ENCODE measurements at regions of chr17 and their contacts with region 1.

Region 1: DNA sequence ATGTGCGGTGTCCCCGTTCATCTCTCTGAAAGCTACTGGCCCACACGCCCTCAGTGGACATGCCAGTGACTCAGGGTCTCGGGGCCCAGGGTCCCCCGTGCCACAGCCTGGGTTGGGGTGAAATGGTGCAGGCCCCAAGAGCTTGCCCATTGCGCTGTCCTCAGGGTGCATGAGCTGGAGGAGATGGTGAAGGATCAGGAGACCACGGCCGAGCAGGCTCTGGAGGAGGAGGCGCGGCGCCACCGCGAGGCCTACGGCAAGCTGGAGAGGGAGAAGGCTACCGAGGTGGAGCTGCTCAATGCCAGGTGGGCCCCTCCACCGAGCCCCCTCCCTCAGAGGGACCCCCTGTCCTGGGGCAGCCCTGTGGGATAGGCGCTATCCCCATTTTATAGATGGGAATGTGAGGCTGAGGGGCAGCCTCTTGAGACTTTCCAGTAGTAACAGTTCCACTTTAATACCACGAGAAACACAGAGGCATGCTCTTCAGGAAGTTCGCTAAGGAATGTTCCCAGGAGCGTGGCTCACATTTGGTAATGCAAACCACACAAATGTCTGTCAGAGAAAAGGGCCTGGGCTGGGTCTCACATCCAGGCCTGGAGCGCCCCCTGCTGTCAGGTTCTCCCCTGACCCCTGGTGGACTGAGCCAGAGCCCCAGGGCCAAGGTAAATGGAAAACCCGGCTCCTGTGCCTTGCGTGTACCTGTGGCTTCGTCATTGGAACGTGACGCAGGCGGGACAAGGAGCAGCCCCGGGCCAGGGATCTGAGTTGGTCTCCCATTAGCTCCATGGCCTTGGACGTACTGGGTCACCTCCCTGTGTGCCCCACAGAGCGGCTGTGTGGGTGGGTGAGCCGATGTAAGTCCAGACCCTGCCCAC is 133.7 kb downstream of the RAB11FIP4 start:
- DNase-seq: peak; percentile 86
- ATAC-seq: peak; percentile 79
- H3K4me3 ChIP-seq: no peak overlapping the region
- H3K4me3 Mint-ChIP-seq: no peak overlapping the region
- H3K27ac ChIP-seq: no peak overlapping the region
- H3K27ac Mint-ChIP-seq: peak overlapping the region; percentile 65
- H3K4me1 ChIP-seq: peaks cover 0 to 13% of the 10 kb centered on the region in 2 donors
- H3K4me1 Mint-ChIP-seq: peaks cover 9% of the 10 kb centered on the region
- H3K27me3 ChIP-seq: no peaks in the 10 kb centered on the region
- H3K27me3 Mint-ChIP-seq: no peaks in the 10 kb centered on the region
- CTCF ChIP-seq: peak; percentile 89

Region 2: GRCh38 chr17:31388770-31389661 is 136.1 kb before region 1 on chr17:
- CTCF ChIA-PET with region 1: interaction called, 54 read pairs
- POLR2A ChIA-PET with region 1: no interaction called
- intact Hi-C with region 1: loop called (anchors 1 kb)
- DNase-seq: peak; percentile 70
- ATAC-seq: peak; percentile 62
- H3K4me3 ChIP-seq: no peak overlapping the region
- H3K4me3 Mint-ChIP-seq: peak overlapping the region; percentile 77
- H3K27ac ChIP-seq: no peak overlapping the region
- H3K27ac Mint-ChIP-seq: no peak overlapping the region
- H3K4me1 ChIP-seq: peaks cover 16 to 17% of the 10 kb centered on the region in 2 donors
- H3K4me1 Mint-ChIP-seq: peaks cover 15% of the 10 kb centered on the region
- H3K27me3 ChIP-seq: peaks cover 0 to 45% (median 20%) of the 10 kb centered on the region in 4 experiments
- H3K27me3 Mint-ChIP-seq: peaks cover 40% of the 10 kb centered on the region
- CTCF ChIP-seq: peak; percentile 77

Region 3: DNA sequence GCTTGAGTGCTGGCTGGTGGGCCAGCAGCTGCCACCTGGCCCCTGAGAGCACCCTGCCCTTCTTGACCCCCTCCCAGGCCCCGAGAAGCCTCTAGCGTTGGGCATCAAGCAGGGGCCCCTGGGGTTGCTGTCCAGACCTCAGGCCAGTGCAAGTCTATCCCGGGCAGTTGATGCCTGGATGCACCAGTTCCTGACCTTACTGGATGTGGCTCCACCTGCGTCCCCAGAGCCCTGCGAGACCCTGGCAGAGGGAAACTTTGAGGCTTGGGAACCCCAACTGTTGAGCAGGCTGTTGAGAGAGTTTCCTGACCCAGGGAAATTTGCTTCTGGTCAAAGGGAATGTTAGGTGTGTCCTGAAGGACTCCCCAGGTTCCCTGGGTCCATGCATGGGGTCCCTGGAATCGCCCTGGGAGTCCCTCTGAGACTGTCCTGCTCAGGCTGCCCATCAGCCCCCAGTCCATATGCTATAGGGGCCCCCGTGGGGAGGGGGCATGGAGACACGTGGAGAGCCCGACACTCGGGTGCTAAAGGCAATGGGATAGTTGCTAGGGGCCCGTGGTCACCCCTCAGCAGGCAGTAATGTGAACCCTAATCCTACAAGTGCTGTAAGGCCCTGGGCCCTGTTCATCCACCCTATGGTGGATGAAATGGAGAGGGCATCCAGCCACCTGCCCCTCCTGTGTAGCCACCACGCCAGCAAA is 87.3 kb before region 1 on chr17:
- CTCF ChIA-PET with region 1: interaction called, 460 read pairs
- POLR2A ChIA-PET with region 1: interaction called, 3 read pairs
- intact Hi-C with region 1: loop called (anchors 1 kb)
- DNase-seq: no peak
- ATAC-seq: no peak
- H3K4me3 ChIP-seq: no peak overlapping the region
- H3K4me3 Mint-ChIP-seq: no peak overlapping the region
- H3K27ac ChIP-seq: no peak overlapping the region
- H3K27ac Mint-ChIP-seq: no peak overlapping the region
- H3K4me1 ChIP-seq: peaks cover 3 to 11% of the 10 kb centered on the region in 2 donors
- H3K4me1 Mint-ChIP-seq: peaks cover 7% of the 10 kb centered on the region
- H3K27me3 ChIP-seq: peaks cover 0 to 5% (median 0%) of the 10 kb centered on the region in 4 experiments
- H3K27me3 Mint-ChIP-seq: no peaks in the 10 kb centered on the region
- CTCF ChIP-seq: no peak

Region 4: DNA sequence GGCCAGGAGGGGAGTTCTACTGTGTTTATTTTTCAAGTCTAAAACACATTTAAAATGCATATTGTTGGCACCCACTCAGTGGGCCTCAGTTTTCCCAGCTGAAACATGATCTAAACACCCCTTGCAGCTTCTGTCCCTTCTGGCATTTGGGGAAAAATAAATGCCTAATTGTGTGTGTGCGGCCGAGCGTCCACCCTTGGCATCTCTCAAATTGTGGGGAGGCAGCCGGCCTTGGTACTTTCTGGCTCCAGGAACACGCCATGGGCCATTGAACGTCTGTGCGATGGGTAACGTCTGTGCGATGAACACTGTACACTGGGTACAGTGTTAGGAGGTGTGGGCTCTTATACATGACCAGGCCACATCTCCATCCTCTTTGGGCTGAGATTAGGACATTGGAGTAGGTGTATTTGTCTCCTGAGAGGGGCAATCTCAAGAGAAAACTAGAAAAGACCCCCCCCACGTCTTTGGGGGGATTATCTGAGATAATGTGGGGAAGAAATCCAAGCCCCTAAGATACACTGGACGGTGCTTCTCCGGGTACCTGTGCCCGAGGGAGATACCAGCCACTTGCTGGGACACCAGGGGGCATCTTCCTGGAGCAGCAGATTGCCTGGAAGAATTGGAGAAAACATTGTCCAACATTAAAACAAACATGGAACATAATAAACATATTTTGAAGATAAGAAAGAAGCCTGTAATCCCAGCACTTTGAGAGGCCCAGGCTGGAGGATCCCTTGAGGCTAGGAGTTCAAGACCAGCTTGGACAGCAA is 78.8 kb before region 1 on chr17:
- CTCF ChIA-PET with region 1: interaction called, 460 read pairs
- POLR2A ChIA-PET with region 1: no interaction called
- intact Hi-C with region 1: no loop called
- DNase-seq: no peak
- ATAC-seq: no peak
- H3K4me3 ChIP-seq: no peak overlapping the region
- H3K4me3 Mint-ChIP-seq: no peak overlapping the region
- H3K27ac ChIP-seq: no peak overlapping the region
- H3K27ac Mint-ChIP-seq: no peak overlapping the region
- H3K4me1 ChIP-seq: peaks cover 1 to 2% of the 10 kb centered on the region in 2 donors
- H3K4me1 Mint-ChIP-seq: peaks cover 6% of the 10 kb centered on the region
- H3K27me3 ChIP-seq: no peaks in the 10 kb centered on the region
- H3K27me3 Mint-ChIP-seq: peaks cover 3% of the 10 kb centered on the region
- CTCF ChIP-seq: no peak

Region 5: DNA sequence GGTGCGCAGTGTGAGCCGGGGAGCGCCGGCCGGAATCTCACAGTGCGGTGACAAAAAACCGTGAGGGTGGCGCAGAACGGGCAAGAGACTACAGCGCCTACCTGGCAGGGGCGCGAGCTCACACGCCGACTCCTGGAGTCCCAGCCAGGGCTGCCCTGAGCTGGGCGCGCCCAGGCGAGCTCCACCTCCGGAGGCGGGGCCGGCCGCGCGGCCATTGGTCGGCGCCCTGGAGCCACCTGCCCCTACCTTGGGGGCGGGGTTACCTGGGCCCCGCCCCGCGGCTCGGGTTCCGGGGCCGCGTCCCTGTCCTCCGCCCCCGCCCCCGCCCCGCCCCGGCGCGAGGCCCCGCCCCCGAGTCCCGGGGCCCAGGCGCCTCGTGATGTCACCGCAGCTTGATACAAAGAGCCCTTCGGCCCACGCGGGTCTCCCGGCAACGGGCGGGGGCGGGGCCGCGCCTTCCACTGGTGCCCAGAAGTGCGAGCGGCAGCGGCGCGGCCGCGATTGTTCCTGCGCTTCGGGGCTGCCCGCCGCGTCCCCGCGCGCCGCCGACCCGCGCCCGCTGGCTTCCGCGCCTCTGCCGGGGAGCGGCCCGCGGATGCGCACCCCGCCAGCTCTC is 37.4 kb before region 1 on chr17:
- CTCF ChIA-PET with region 1: interaction called, 44 read pairs
- POLR2A ChIA-PET with region 1: interaction called, 3 read pairs
- intact Hi-C with region 1: loop called (anchors 1 kb)
- DNase-seq: peak; percentile 96
- ATAC-seq: peak; percentile 85
- H3K4me3 ChIP-seq: peak overlapping the region in 4 of 5 experiments; percentile 74 to 84 (median 82)
- H3K4me3 Mint-ChIP-seq: peak overlapping the region; percentile 94
- H3K27ac ChIP-seq: peak overlapping the region; percentile 65 to 90
- H3K27ac Mint-ChIP-seq: peak overlapping the region; percentile 95
- H3K4me1 ChIP-seq: peaks cover 49 to 54% of the 10 kb centered on the region in 2 donors
- H3K4me1 Mint-ChIP-seq: peaks cover 52% of the 10 kb centered on the region
- H3K27me3 ChIP-seq: no peaks in the 10 kb centered on the region
- H3K27me3 Mint-ChIP-seq: no peaks in the 10 kb centered on the region
- CTCF ChIP-seq: peak; percentile 11

Region 6: DNA sequence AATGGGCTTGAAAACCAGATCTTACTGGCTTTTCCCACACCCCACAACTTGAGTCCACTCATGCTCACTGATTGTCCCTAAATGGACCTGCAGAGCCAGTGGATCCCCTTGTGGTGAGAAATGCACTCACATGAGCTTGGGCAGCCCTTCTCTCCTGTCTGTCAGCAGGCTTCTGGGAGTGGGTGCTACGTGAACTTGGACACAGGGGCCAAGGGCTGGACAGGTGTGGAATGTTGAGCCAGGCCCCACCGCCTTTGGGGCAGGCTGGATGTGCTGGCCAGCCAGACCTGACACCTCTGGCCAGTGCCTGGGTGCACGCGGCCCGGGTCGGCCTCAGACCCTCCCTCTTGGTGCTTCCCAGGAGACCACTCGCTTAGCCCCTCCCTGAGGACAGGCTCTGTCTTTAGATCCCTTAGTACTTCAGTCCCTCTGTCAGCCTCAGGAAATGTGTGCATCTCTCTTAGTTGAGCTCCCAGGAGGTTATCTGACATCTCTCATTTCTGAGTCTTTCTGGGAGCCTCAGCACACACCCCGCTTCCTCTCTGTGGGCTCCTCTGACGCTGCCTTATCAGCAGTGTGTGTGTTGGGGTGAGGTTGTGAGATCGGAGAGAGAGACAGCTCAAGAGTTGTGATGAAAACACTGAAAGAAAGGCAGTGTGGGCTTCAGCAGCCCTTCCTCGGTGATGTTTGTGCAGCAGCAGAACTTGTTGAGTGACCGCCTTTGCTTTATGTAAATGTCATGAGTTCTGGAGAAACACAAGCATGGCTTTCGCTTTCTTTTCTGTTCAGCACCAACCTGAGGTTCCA is 16.7 kb before region 1 on chr17:
- CTCF ChIA-PET with region 1: interaction called, 65 read pairs
- POLR2A ChIA-PET with region 1: interaction called, 4 read pairs
- intact Hi-C with region 1: no loop called
- DNase-seq: peak; percentile 79
- ATAC-seq: peak; percentile 81
- H3K4me3 ChIP-seq: peak overlapping the region; percentile 24 to 65 (median 38)
- H3K4me3 Mint-ChIP-seq: peak overlapping the region; percentile 94
- H3K27ac ChIP-seq: peak overlapping the region; percentile 83 to 89
- H3K27ac Mint-ChIP-seq: peak overlapping the region; percentile 96
- H3K4me1 ChIP-seq: peaks cover 49 to 56% of the 10 kb centered on the region in 2 donors
- H3K4me1 Mint-ChIP-seq: peaks cover 61% of the 10 kb centered on the region
- H3K27me3 ChIP-seq: no peaks in the 10 kb centered on the region
- H3K27me3 Mint-ChIP-seq: no peaks in the 10 kb centered on the region
- CTCF ChIP-seq: peak; percentile 67

Region 7: GRCh38 chr17:31541559-31541958 is 16.4 kb after region 1 on chr17:
- CTCF ChIA-PET with region 1: interaction called, 20 read pairs
- POLR2A ChIA-PET with region 1: no interaction called
- intact Hi-C with region 1: no loop called
- DNase-seq: no peak
- ATAC-seq: no peak
- H3K4me3 ChIP-seq: no peak overlapping the region
- H3K4me3 Mint-ChIP-seq: no peak overlapping the region
- H3K27ac ChIP-seq: no peak overlapping the region
- H3K27ac Mint-ChIP-seq: peak overlapping the region; percentile 74
- H3K4me1 ChIP-seq: peaks cover 42 to 48% of the 10 kb centered on the region in 2 donors
- H3K4me1 Mint-ChIP-seq: peaks cover 52% of the 10 kb centered on the region
- H3K27me3 ChIP-seq: no peaks in the 10 kb centered on the region
- H3K27me3 Mint-ChIP-seq: no peaks in the 10 kb centered on the region
- CTCF ChIP-seq: no peak